T-cell (primary cell): ENCODE measurements at regions of chr6 and their contacts with region 1.

Region 1: DNA sequence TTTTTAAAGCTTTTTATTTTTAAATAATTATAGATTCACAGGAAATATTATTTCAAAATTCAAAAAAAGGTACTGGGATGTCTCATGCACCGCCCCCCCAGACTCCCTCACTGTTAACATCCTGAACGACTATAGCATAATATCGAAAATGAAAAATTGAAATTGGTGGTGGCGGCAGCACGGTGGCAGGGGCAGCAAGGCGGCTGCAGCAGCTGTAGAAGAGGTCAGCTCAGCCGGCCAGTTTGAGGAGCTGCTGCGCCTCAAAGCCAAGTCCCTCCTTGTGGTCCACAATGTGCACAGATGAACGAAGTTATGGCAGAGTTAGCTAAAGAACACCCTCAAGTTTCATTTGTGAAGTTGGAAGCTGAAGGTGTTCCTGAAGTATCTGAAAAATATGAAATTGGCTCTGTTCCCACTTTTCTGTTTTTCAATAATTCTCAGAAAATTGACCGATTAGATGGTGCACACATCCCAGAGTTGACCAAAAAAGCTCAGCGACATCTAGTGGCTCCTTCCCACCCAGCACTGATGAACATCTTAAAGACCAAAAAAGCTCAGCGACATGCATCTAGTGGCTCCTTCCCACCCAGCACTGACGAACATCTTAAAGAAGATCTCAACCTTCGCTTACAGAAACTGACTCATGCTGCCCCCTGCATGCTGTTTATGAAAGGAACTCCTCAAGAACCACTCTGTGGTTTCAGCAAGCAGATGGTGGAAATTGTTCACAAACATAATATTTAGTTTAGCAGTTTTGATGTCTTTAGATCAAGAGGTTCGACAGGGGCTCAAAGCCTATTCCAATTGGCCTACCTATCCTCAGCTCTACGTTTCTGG is 100.8 kb downstream of the FAM217A start:
- DNase-seq: peak; percentile 2 to 71 (median 35)
- ATAC-seq: peak; percentile 96 to 100 (median 98)
- H3K4me3 ChIP-seq: peak overlapping the region in 1 of 2 donors; percentile 23
- H3K4me3 Mint-ChIP-seq: peak overlapping the region in 1 of 3 donors; percentile 44
- H3K27ac ChIP-seq: peak overlapping the region; percentile 6
- H3K27ac Mint-ChIP-seq: no peak overlapping the region
- H3K4me1 ChIP-seq: peaks cover 0 to 8% of the 10 kb centered on the region in 2 experiments
- H3K4me1 Mint-ChIP-seq: peaks cover 9% of the 10 kb centered on the region in 3 donors
- H3K27me3 ChIP-seq: no peaks in the 10 kb centered on the region
- H3K27me3 Mint-ChIP-seq: peaks cover 4 to 5% of the 10 kb centered on the region in 2 donors

Region 2: DNA sequence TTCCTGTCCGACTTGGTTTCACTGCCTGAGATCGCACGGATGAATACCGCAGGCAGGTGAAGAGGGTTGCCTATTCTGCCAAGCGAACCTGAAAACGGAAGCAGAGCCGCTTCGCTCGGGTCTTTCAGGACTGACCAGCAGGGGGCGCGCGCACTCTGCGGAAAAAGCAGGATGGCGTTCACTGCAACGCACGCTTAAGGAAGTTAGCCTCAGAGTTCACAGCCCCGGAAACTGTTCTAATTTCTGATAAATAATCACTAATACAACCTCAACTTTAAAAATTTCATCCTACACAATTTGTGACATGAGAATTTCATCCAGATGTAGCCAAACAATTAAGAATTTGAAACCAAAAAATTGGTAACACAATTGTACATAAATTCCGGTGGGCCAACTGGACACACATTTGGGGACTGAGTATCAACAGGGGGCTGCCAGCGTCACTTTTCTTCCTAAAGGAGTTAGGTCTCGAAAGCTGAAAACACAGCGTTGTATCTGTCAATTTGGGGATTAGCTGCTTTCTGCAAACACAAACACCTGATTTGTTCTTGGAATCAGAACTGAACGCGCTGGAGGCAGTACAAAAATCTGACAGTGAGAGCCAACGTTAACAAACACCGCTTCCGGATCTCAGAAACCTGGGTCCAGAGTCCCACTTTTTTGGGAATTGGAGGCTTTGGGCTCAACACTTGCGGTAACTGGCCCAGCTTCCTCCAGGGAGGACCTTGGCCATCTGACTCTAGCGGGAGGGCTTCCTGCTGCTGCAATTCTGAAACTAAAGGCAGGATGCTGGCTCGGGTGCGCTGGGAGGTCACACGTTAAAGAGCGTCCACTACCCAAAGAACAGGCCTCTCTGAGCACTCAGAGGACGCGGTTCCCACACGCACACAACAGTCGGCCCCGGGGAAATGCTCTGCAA is 235.4 kb before region 1 on chr6:
- CTCF ChIA-PET with region 1: interaction called, 3 to 19 read pairs
- POLR2A ChIA-PET with region 1: no interaction called
- DNase-seq: peak; percentile 62 to 94 (median 86)
- ATAC-seq: peak; percentile 83 to 96 (median 92)
- H3K4me3 ChIP-seq: no peak overlapping the region
- H3K4me3 Mint-ChIP-seq: peak overlapping the region; percentile 25 to 64 (median 63)
- H3K27ac ChIP-seq: no peak overlapping the region
- H3K27ac Mint-ChIP-seq: peak overlapping the region; percentile 65 to 72
- H3K4me1 ChIP-seq: peaks cover 0 to 11% of the 10 kb centered on the region in 2 experiments
- H3K4me1 Mint-ChIP-seq: peaks cover 14 to 18% (median 18%) of the 10 kb centered on the region in 3 donors
- H3K27me3 ChIP-seq: peaks cover 0 to 28% of the 10 kb centered on the region in 2 experiments
- H3K27me3 Mint-ChIP-seq: peaks cover 14 to 22% of the 10 kb centered on the region in 2 donors

Region 3: GRCh38 chr6:3848925-3849605 is 129.0 kb before region 1 on chr6 and contains the start of gene FAM50B:
- CTCF ChIA-PET with region 1: interaction called, 8 to 23 read pairs
- POLR2A ChIA-PET with region 1: no interaction called
- DNase-seq: peak; percentile 78 to 93 (median 87)
- ATAC-seq: peak; percentile 90 to 96 (median 93)
- H3K4me3 ChIP-seq: peak within 1 kb of the TSS; percentile 59 to 67
- H3K4me3 Mint-ChIP-seq: peak within 1 kb of the TSS; percentile 76 to 79 (median 79)
- H3K27ac ChIP-seq: peak within 1 kb of the TSS; percentile 62
- H3K27ac Mint-ChIP-seq: peak within 1 kb of the TSS; percentile 89 to 91
- H3K4me1 ChIP-seq: peaks cover 0 to 34% of the 10 kb centered on the region in 2 experiments
- H3K4me1 Mint-ChIP-seq: peaks cover 20 to 27% (median 24%) of the 10 kb centered on the region in 3 donors
- H3K27me3 ChIP-seq: no peaks in the 10 kb centered on the region
- H3K27me3 Mint-ChIP-seq: no peaks in the 10 kb centered on the region
- total RNA-seq, gene FAM50B: 2.3 to 14.9 (median 11.6) TPM

Region 4: GRCh38 chr6:3929281-3929798 is 48.8 kb before region 1 on chr6:
- CTCF ChIA-PET with region 1: interaction called, 3 to 13 read pairs
- POLR2A ChIA-PET with region 1: no interaction called
- DNase-seq: no peak
- ATAC-seq: no peak
- H3K4me3 ChIP-seq: no peak overlapping the region
- H3K4me3 Mint-ChIP-seq: no peak overlapping the region
- H3K27ac ChIP-seq: no peak overlapping the region
- H3K27ac Mint-ChIP-seq: no peak overlapping the region
- H3K4me1 ChIP-seq: no peaks in the 10 kb centered on the region
- H3K4me1 Mint-ChIP-seq: no peaks in the 10 kb centered on the region
- H3K27me3 ChIP-seq: peaks cover 0 to 6% of the 10 kb centered on the region in 2 experiments
- H3K27me3 Mint-ChIP-seq: peaks cover 7 to 12% of the 10 kb centered on the region in 2 donors